CD4-positive, alpha-beta memory T cell (primary cell): ENCODE measurements at regions of chr19 and their contacts with region 1.

Region 1: GRCh38 chr19:49451430-49452181 is at the start of gene PIH1D1:
- DNase-seq: peak; percentile 91 to 98 (median 95)
- H3K4me3 ChIP-seq: peak within 1 kb of the TSS; percentile 66 to 90
- H3K4me3 Mint-ChIP-seq: peak within 1 kb of the TSS; percentile 91 to 100 (median 99)
- H3K27ac ChIP-seq: peak within 1 kb of the TSS; percentile 91
- H3K27ac Mint-ChIP-seq: peak within 1 kb of the TSS; percentile 96 to 100 (median 100)
- H3K4me1 ChIP-seq: peaks cover 37% of the 10 kb centered on the region
- H3K4me1 Mint-ChIP-seq: peaks cover 25 to 70% (median 41%) of the 10 kb centered on the region in 4 donors
- H3K27me3 ChIP-seq: no peaks in the 10 kb centered on the region
- H3K27me3 Mint-ChIP-seq: no peaks in the 10 kb centered on the region
- total RNA-seq, gene PIH1D1: 178 to 186 TPM

Region 2: GRCh38 chr19:49118565-49119410 is 332.8 kb before region 1 on chr19 and contains the start of gene C19orf73:
- CTCF ChIA-PET with region 1: no interaction called
- POLR2A ChIA-PET with region 1: no interaction called
- intact Hi-C with region 1: loop called (anchors 5 kb)
- DNase-seq: peak; percentile 94 to 98 (median 97)
- H3K4me3 ChIP-seq: peak within 1 kb of the TSS; percentile 73 to 78
- H3K4me3 Mint-ChIP-seq: peak within 1 kb of the TSS; percentile 83 to 93 (median 88)
- H3K27ac ChIP-seq: peak within 1 kb of the TSS; percentile 79
- H3K27ac Mint-ChIP-seq: peak within 1 kb of the TSS; percentile 90 to 96 (median 94)
- H3K4me1 ChIP-seq: peaks cover 31% of the 10 kb centered on the region
- H3K4me1 Mint-ChIP-seq: peaks cover 22 to 42% (median 36%) of the 10 kb centered on the region in 4 donors
- H3K27me3 ChIP-seq: no peaks in the 10 kb centered on the region
- H3K27me3 Mint-ChIP-seq: no peaks in the 10 kb centered on the region
- total RNA-seq, gene C19orf73: 1.7 to 1.9 TPM

Region 3: DNA sequence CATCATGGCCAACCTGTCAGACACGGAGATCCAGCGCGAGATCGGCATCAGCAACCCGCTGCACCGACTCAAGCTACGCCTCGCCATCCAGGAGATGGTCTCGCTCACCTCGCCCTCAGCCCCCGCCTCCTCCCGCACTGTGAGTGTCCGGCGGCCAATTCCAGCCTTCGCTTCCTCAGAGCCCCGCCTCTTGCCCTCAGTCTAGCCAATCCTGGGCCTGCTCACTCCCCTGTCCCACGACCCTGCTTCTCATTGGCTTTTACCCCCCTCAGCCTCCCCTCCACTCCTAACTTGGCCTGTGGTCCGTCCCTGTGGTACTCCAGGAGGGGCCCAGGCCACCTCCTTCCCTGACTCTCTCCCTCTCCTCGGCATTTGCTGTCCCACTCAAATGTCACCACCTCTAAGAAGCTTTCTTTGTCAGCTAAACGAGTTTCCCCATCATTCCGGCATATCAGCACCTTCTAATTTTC is 308.7 kb before region 1 on chr19:
- CTCF ChIA-PET with region 1: no interaction called
- POLR2A ChIA-PET with region 1: no interaction called
- intact Hi-C with region 1: no loop called
- DNase-seq: peak in 3 of 5 donors; percentile 22 to 49 (median 44)
- H3K4me3 ChIP-seq: peak overlapping the region in 1 of 2 donors; percentile 37
- H3K4me3 Mint-ChIP-seq: peak overlapping the region; percentile 36 to 78 (median 63)
- H3K27ac ChIP-seq: no peak overlapping the region
- H3K27ac Mint-ChIP-seq: no peak overlapping the region
- H3K4me1 ChIP-seq: peaks cover 16% of the 10 kb centered on the region
- H3K4me1 Mint-ChIP-seq: peaks cover 12 to 24% (median 20%) of the 10 kb centered on the region in 4 donors
- H3K27me3 ChIP-seq: peaks cover 7% of the 10 kb centered on the region
- H3K27me3 Mint-ChIP-seq: peaks cover 13 to 18% of the 10 kb centered on the region in 2 donors

Region 4: DNA sequence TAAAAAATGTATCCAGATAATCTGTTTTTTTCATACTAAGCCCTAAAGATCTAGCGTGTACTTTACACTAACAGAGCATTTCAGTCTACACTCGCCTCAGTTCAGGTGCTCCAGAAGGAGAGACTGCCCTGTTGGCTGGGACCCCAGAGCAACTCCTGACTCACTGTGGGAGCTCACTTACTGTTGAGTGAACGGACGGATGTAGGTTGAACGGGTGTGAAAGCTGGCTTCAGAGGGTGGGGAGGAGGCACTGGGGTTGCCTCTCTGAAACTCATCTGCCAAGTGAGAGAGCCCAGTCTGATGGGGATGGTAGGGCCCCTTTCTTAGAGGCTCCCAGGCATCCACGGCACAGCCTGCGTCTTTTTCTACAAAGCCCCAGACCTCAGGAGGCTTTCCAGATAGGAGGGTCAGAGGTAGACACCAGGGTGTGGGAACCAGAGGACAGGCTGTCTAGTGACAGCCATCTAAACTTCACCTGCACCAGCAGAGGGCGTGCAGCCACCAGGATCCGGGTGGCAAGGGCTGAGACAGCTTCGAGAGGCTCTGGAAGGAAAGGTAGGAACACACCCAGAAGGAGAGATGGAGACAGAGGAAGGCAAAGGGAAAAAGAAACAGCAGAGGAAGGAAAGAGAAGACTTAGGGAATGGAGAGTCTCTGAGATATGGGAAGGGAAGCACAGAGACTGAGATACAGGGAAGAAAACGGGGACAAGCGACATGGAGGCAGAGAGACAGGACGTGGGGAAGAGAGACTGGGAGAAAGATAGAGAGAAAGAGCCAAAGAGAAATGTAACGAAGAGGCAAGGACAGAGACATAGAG is 59.8 kb before region 1 on chr19:
- CTCF ChIA-PET with region 1: interaction called, 19 read pairs
- POLR2A ChIA-PET with region 1: interaction called, 7 read pairs
- intact Hi-C with region 1: no loop called
- DNase-seq: peak; percentile 76 to 80 (median 78)
- H3K4me3 ChIP-seq: no peak overlapping the region
- H3K4me3 Mint-ChIP-seq: no peak overlapping the region
- H3K27ac ChIP-seq: no peak overlapping the region
- H3K27ac Mint-ChIP-seq: peak overlapping the region in 6 of 7 donors; percentile 9 to 85 (median 60)
- H3K4me1 ChIP-seq: peaks cover 21% of the 10 kb centered on the region
- H3K4me1 Mint-ChIP-seq: peaks cover 8 to 24% (median 11%) of the 10 kb centered on the region in 4 donors
- H3K27me3 ChIP-seq: no peaks in the 10 kb centered on the region
- H3K27me3 Mint-ChIP-seq: no peaks in the 10 kb centered on the region

Region 5: DNA sequence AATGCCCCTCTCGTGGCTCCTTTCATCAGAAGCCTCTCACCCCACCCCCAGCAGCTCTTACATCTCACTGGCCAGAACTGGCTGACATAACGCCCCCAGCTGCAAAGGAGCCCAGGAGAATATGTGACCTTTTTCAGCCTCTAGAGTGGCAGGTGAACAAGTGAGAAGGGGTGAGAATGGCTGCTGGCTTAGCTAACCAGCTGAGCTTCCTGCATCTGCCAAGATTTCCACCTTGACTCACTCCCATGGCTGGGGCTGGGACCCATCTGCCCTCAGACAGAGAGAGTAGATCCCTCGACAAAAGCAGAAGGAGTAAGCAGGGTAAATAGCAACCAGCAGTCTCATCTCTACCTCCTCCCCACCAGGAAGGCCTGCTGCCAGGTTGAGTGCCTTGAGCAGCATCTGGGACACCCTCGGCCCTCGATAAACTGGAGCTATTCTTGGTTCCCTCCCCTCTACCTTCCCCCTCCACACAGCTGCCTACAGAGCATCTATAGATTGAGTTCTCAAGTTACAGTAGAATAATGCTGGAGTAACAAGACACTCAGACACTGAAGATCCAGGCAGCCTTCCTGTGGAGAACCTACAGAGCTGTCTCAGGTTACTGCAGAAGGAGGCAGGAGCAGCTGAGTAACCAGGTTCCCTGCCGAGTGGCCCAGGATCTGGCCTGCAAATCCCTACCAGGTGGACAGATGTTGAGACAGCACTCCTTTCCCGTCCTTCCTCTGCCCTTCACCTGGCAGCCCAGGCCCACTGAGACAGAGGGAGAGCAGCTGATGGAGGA is 48.0 kb before region 1 on chr19:
- CTCF ChIA-PET with region 1: no interaction called
- POLR2A ChIA-PET with region 1: no interaction called
- intact Hi-C with region 1: no loop called
- DNase-seq: peak in 1 of 5 donors; percentile 34
- H3K4me3 ChIP-seq: no peak overlapping the region
- H3K4me3 Mint-ChIP-seq: peak overlapping the region in 1 of 8 donors; percentile 11
- H3K27ac ChIP-seq: no peak overlapping the region
- H3K27ac Mint-ChIP-seq: peak overlapping the region in 1 of 7 donors; percentile 22
- H3K4me1 ChIP-seq: peaks cover 33% of the 10 kb centered on the region
- H3K4me1 Mint-ChIP-seq: peaks cover 13 to 43% (median 27%) of the 10 kb centered on the region in 4 donors
- H3K27me3 ChIP-seq: no peaks in the 10 kb centered on the region
- H3K27me3 Mint-ChIP-seq: peaks cover 0 to 2% of the 10 kb centered on the region in 2 donors

Region 6: GRCh38 chr19:49415102-49415809 is 36.4 kb before region 1 on chr19:
- CTCF ChIA-PET with region 1: no interaction called
- POLR2A ChIA-PET with region 1: no interaction called
- intact Hi-C with region 1: no loop called
- DNase-seq: peak in 1 of 5 donors; percentile 23
- H3K4me3 ChIP-seq: no peak overlapping the region
- H3K4me3 Mint-ChIP-seq: no peak overlapping the region
- H3K27ac ChIP-seq: no peak overlapping the region
- H3K27ac Mint-ChIP-seq: no peak overlapping the region
- H3K4me1 ChIP-seq: peaks cover 20% of the 10 kb centered on the region
- H3K4me1 Mint-ChIP-seq: peaks cover 17 to 38% (median 24%) of the 10 kb centered on the region in 4 donors
- H3K27me3 ChIP-seq: peaks cover 8% of the 10 kb centered on the region
- H3K27me3 Mint-ChIP-seq: peaks cover 16 to 17% of the 10 kb centered on the region in 2 donors

Region 7: DNA sequence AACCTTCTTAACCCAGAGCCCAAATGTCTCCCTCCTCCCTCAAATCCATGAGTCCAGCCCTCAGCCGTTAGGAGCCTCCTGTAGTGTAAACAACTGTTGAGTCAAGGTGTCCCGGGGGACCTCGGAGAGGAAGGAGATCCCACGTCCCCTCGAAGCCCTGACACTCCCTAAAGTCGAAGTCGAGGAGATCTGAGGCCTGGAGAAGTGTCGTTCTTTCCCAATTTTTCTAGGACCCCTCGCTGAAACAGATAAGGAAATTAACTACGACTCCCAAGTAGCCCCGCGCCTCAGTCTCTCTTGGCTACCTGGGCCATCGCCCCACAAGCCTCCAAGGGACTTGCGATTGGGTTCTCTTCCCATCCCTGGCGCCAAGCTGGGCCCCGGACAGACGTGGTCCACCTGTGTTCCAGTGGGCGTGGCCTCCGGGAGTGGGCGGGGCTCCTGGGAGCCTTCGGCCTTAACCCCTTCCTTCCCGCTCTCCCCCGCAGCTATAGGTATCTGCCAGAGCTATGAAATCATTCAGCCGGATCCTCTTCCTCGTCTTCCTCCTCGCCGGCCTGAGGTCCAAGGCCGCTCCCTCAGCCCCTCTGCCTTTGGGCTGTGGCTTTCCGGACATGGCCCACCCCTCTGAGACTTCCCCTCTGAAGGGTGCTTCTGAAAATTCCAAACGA is 25.5 kb before region 1 on chr19:
- CTCF ChIA-PET with region 1: no interaction called
- POLR2A ChIA-PET with region 1: no interaction called
- intact Hi-C with region 1: no loop called
- DNase-seq: peak in 1 of 5 donors; percentile 31
- H3K4me3 ChIP-seq: no peak overlapping the region
- H3K4me3 Mint-ChIP-seq: peak overlapping the region in 4 of 8 donors; percentile 1 to 70 (median 39)
- H3K27ac ChIP-seq: no peak overlapping the region
- H3K27ac Mint-ChIP-seq: peak overlapping the region in 2 of 7 donors; percentile 62 to 74
- H3K4me1 ChIP-seq: peaks cover 51% of the 10 kb centered on the region
- H3K4me1 Mint-ChIP-seq: peaks cover 41 to 91% (median 63%) of the 10 kb centered on the region in 4 donors
- H3K27me3 ChIP-seq: peaks cover 70% of the 10 kb centered on the region
- H3K27me3 Mint-ChIP-seq: peaks cover 71 to 78% of the 10 kb centered on the region in 2 donors

Region 8: GRCh38 chr19:49487277-49488045 is 35.9 kb after region 1 on chr19 and contains the start of gene RPL13A:
- CTCF ChIA-PET with region 1: no interaction called
- POLR2A ChIA-PET with region 1: interaction called, 29 read pairs
- intact Hi-C with region 1: loop called (anchors 1 kb)
- DNase-seq: peak; percentile 98 to 100 (median 100)
- H3K4me3 ChIP-seq: peak within 1 kb of the TSS; percentile 98 to 99
- H3K4me3 Mint-ChIP-seq: peak within 1 kb of the TSS; percentile 94 to 100 (median 98)
- H3K27ac ChIP-seq: peak within 1 kb of the TSS; percentile 85
- H3K27ac Mint-ChIP-seq: peak within 1 kb of the TSS; percentile 95 to 98 (median 98)
- H3K4me1 ChIP-seq: peaks cover 39% of the 10 kb centered on the region
- H3K4me1 Mint-ChIP-seq: peaks cover 18 to 55% (median 36%) of the 10 kb centered on the region in 4 donors
- H3K27me3 ChIP-seq: no peaks in the 10 kb centered on the region
- H3K27me3 Mint-ChIP-seq: no peaks in the 10 kb centered on the region
- total RNA-seq, gene RPL13A: 5,517 to 5,661 TPM

Region 9: DNA sequence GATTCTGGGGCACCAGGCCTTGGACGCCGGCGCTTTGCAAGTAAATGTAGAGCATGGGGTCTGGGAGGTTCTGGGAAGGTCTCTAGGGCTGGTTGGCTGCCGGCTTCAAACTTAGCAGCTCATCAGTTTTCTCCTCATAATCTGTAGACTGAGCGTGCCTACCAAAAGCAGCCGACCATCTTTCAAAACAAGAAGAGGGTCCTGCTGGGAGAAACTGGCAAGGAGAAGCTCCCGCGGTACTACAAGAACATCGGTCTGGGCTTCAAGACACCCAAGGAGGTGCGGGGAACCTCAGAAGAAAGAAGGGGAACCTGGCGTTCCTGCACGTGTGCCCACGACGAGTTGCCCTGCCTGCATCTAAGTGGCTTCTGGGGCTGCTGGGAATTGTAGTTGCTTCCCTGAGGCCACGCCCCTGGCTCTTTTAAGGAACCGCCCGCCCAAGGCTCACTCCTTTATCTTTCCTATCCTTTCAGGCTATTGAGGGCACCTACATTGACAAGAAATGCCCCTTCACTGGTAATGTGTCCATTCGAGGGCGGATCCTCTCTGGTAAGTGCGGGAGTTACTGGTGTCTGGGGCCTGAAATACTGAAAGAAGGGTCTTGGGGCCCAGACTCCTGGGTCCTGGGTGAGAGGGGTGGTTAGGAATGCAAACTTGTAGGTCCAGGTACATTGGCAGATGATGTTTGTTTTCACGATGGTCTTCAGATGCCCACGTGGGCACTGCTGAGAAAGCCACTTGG is 45.6 kb after region 1 on chr19:
- CTCF ChIA-PET with region 1: no interaction called
- POLR2A ChIA-PET with region 1: interaction called, 13 read pairs
- intact Hi-C with region 1: loop called (anchors 1 kb)
- DNase-seq: peak; percentile 79 to 89 (median 83)
- H3K4me3 ChIP-seq: peak overlapping the region; percentile 92 to 99
- H3K4me3 Mint-ChIP-seq: peak overlapping the region; percentile 99 to 100 (median 100)
- H3K27ac ChIP-seq: peak overlapping the region; percentile 95
- H3K27ac Mint-ChIP-seq: peak overlapping the region; percentile 95 to 100 (median 99)
- H3K4me1 ChIP-seq: peaks cover 55% of the 10 kb centered on the region
- H3K4me1 Mint-ChIP-seq: peaks cover 23 to 87% (median 43%) of the 10 kb centered on the region in 4 donors
- H3K27me3 ChIP-seq: no peaks in the 10 kb centered on the region
- H3K27me3 Mint-ChIP-seq: no peaks in the 10 kb centered on the region